Adrenal gland (tissue), 19 donors: ENCODE measurements at regions of chr7 and their contacts with region 1.

Region 1: DNA sequence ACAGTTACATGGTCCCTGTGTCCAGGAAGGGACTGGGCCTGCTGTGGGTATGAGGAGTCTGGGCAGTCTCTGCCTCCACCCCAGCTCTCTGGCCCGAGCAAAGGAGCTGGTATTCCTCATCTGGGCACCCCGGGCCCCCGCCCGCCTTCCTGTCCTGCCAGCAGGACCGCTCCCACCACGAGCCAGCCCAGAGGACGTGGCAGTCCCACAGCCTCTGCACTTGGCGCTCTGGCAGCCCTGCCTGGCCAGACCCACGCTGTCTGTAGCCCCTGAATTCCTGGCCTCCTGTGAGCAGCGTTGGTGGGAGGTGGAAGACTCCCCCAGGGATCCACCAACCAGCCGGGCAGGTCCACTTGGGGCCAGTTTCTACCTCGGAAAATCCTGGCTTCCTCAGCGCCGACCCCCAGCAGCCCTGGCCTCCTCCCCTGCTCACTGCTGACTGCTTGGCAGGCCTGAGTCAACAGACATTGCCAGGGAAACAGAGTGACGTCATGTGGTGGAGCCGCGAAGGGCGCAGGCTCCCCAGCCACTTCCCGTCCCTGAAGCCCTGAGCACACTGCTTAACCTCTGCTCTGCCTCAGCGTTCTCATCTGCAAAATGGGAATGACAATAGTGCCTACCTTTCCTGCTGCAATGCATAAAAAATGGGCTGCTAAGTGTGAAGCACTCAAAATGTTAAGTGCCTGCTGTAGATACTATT is 21.6 kb upstream of the LIMK1 start:
- DNase-seq: peak; percentile 88 to 94 (median 92)
- H3K4me3 ChIP-seq: peak overlapping the region in 1 of 4 donors; percentile 11
- H3K27ac ChIP-seq: peak overlapping the region in 4 of 5 donors; percentile 37 to 89 (median 64)
- H3K4me1 ChIP-seq: peaks cover 4 to 13% of the 10 kb centered on the region in 2 donors
- H3K27me3 ChIP-seq: no peaks in the 10 kb centered on the region
- CTCF ChIP-seq: no peak
- POLR2A ChIP-seq: peak in 1 of 2 donors; percentile 40

Region 2: GRCh38 chr7:74026903-74027551 is 35.0 kb before region 1 on chr7:
- intact Hi-C with region 1: no loop called
- DNase-seq: peak; percentile 49 to 87 (median 74)
- H3K4me3 ChIP-seq: peak overlapping the region in 1 of 4 donors; percentile 45
- H3K27ac ChIP-seq: peak overlapping the region in 2 of 5 donors; percentile 71 to 74
- H3K4me1 ChIP-seq: peaks cover 0 to 22% of the 10 kb centered on the region in 2 donors
- H3K27me3 ChIP-seq: peaks cover 9% of the 10 kb centered on the region
- CTCF ChIP-seq: peak; percentile 74 to 91 (median 87)
- POLR2A ChIP-seq: peak in 1 of 2 donors; percentile 16

Region 3: GRCh38 chr7:74272305-74273038 is 210.5 kb after region 1 on chr7:
- intact Hi-C with region 1: loop called in 1 of 2 experiments (anchors 10 kb)
- DNase-seq: peak; percentile 57 to 88 (median 79)
- H3K4me3 ChIP-seq: no peak overlapping the region
- H3K27ac ChIP-seq: peak overlapping the region; percentile 60 to 88 (median 74)
- H3K4me1 ChIP-seq: peaks cover 0 to 15% of the 10 kb centered on the region in 2 donors
- H3K27me3 ChIP-seq: no peaks in the 10 kb centered on the region
- CTCF ChIP-seq: no peak
- POLR2A ChIP-seq: no peak